ENCODE measurements at regions of chr6 and their contacts with region 1.

Region 1: DNA sequence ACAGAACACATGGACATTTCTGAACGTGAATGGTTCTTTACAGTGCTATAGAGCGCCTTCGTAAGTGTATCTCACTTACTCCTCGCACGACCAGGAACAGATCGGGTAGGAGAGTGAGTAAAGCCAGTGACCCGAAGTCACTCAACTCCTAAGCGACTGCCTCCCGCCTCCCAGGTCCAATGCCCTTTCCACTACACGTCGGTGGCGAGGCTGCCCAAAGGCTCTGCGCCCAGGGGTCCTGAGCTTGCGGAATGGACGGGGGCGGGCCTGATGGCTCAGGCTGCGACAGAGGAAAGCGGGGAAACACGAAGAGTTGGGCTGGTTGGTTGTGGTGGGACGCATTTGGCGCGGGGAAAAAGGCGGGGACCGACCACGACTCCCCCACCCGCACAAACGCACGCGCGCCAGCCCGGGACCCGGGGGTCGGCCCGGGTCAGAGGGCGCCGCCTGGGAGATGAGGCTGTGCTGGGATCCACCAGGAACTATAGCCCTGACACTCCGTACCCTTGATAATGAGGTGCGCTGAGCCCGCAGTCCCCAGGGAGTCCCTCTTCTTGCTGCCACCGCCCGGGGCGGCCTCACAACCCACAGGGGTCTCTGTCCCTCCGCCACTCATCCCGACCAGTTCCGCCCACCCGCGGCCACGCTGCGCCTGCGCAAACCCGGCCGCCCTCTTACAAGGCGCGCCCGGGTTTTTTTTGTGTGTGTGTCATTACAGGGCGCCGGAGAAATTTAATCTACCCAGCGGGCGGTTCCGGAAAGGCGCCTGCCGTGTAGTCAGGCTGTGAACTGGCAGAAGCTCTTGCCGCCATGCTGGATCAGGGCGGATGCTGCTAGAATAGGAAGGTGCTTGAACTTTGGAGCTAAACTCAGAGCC is at the start of gene BLOC1S5:
- DNase-seq: peak; percentile 41 to 95
- ATAC-seq: peak; percentile 97 to 98
- H3K4me3 ChIP-seq: peak within 1 kb of the TSS; percentile 93
- H3K27ac ChIP-seq: peak within 1 kb of the TSS; percentile 89 to 96
- H3K4me1 ChIP-seq: peaks cover 6% of the 10 kb centered on the region
- CTCF ChIP-seq: no peak
- EP300 ChIP-seq: no peak
- POLR2A ChIP-seq: peak; percentile 44
- RAD21 ChIP-seq: no peak
- polyA plus RNA-seq, gene BLOC1S5: 7.9 and 10.8 TPM in 2 replicates

Region 2: DNA sequence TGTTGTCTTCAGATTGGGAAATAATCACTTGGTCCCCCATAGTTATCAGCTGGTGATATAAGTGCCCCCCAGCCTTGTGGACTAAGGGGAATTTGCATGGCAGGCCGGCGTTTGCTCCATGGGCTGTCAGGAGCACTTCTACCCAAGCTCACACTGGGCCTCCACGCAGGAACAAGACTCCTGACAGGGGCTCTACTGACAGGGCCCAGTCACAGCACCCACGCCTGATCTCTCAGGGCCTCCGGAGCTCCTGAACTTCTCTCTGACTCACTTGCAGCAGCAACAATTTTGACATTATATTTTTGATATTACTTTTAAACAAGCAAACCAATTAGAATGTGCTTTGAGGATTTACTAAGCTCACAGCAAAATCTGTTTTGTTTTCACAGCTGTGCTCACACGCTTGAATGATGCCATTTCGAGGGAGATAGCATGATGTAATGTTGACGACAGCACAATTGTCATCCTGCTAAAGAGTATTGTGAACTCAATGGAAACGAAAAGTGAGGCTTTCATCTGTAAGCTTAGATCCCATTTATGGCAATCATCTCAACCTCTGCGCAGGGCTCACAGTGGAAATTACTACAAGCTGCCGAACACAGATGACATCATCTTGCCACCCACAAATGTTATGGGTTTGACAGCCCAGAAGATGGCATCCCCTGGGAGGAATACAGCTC is 124.7 kb before region 1 on chr6:
- CTCF ChIA-PET with region 1: no interaction called
- POLR2A ChIA-PET with region 1: no interaction called
- DNase-seq: no peak
- ATAC-seq: no peak
- H3K4me3 ChIP-seq: no peak overlapping the region
- H3K27ac ChIP-seq: no peak overlapping the region
- H3K4me1 ChIP-seq: no peaks in the 10 kb centered on the region
- CTCF ChIP-seq: no peak
- EP300 ChIP-seq: no peak
- POLR2A ChIP-seq: no peak
- RAD21 ChIP-seq: no peak

Region 3: DNA sequence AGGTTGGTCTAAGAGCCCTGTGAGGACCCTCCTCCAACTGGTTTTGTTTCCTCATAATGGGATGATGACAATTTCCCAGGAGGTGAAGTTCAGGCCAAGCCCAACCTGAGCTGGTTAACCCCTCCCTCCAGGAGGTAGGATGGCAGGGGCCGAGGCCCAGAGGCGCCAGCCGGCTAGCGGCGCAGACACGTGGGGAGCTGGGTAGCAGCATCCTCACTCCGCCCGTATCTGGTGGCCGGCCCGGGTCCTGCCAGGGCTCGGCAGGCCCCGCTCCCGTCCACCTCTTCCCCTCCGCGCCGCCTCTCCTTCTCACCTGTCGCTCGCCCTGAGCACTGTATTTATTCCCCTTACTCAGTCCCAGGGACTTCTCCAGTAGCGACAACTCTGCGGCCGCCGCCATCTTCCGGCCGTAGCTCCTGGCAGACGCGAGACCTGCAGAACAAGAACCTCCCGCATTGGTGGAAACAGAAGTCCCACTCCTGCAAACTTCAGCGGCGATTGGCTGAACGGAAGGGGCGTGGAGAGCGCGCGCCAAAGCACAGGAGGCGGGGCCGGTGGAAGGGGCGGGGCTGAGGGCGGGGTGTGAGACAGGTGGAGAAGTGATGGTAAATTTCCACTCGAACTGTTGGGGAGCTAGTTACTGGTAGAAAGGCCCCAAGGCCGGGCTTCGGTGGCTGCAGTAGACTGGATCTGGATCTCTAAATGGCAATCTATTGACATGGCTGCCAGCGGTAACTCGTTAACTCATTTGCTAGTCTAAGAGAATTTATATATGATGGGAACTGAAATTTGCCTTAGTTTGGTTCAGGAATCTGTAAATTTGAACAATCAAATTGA is 38.3 kb after region 1 on chr6 and contains the start of gene EEF1E1:
- CTCF ChIA-PET with region 1: no interaction called
- POLR2A ChIA-PET with region 1: interaction called, 14 read pairs
- DNase-seq: peak; percentile 89 to 94
- ATAC-seq: peak; percentile 99
- H3K4me3 ChIP-seq: peak within 1 kb of the TSS; percentile 62
- H3K27ac ChIP-seq: peak within 1 kb of the TSS; percentile 84 to 90
- H3K4me1 ChIP-seq: peaks cover 11% of the 10 kb centered on the region; the same call in 2 of the 3 replicates
- CTCF ChIP-seq: no peak
- EP300 ChIP-seq: no peak
- POLR2A ChIP-seq: peak; percentile 60
- RAD21 ChIP-seq: no peak
- polyA plus RNA-seq, gene EEF1E1: 107 and 122 TPM in 2 replicates

Measured in A549 (cell line).